MCF 10A (cell line): ENCODE measurements at regions of chr3 and their contacts with region 1.

Region 1: GRCh38 chr3:160449636-160450598 is at the start of gene TRIM59:
- DNase-seq: peak; percentile 94
- H3K4me3 Mint-ChIP-seq: peak within 1 kb of the TSS; percentile 100
- H3K27ac Mint-ChIP-seq: peak within 1 kb of the TSS; percentile 95
- H3K4me1 Mint-ChIP-seq: peaks cover 5% of the 10 kb centered on the region
- H3K27me3 Mint-ChIP-seq: no peaks in the 10 kb centered on the region
- CTCF ChIP-seq: no peak
- total RNA-seq, gene TRIM59: 12.1 and 15.1 TPM in 2 replicates

Region 2: DNA sequence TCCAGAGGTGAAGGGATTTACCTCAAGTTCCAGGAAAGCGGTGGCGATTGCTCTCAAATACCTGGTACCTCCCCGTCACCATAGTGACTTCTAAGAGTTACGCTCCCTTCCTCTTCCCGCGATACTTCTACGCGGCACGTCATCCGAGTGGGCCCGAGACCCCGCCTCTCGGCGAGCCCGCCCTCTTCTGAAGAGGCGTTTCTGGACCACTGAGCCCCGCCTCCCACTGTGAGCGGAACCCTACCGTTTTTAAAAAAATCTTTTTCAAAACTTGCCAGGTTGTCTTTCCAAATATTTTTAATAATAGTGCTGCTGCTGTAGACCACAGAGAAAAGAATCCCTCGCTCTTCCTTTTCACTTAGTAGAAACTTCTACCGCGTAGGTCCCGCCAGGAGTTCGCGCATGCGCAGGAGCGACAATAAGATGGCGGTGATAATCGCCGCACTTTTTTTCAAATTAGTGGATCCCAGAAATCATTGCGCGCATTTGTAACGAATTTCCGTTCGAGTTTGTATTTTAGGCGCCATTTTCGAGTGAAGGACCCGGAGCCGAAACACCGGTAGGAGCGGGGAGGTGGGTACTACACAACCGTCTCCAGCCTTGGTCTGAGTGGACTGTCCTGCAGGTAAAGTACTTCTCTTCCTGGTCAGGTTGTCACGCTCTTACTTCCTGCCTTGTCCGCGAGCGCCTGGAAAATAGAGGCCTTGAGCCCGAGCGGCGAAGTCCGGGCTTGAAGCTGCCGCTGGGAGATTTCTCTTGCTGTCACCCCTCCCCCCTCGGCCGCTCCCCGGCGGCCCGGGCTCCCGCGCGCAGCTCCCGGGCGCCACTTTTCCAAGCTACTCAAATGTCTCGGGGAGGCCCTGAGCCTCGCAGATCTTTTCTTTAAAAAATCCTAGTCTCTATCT is 50.5 kb before region 1 on chr3 and contains the starts of genes IFT80 and SMC4:
- CTCF ChIA-PET with region 1: no interaction called
- POLR2A ChIA-PET with region 1: interaction called, 31 read pairs
- intact Hi-C with region 1: loop called (anchors 5 kb)
- DNase-seq: peak; percentile 97
- H3K4me3 Mint-ChIP-seq: peak within 1 kb of the TSS; percentile 88
- H3K27ac Mint-ChIP-seq: peak within 1 kb of the TSS; percentile 100
- H3K4me1 Mint-ChIP-seq: peaks cover 31% of the 10 kb centered on the region
- H3K27me3 Mint-ChIP-seq: no peaks in the 10 kb centered on the region
- CTCF ChIP-seq: no peak
- total RNA-seq, gene IFT80: 22.6 and 29.0 TPM in 2 replicates
- total RNA-seq, gene SMC4: 89.3 and 116 TPM in 2 replicates

Region 3: GRCh38 chr3:160413613-160414248 is 36.2 kb before region 1 on chr3:
- CTCF ChIA-PET with region 1: interaction called, 4 read pairs
- POLR2A ChIA-PET with region 1: interaction called, 13 read pairs
- intact Hi-C with region 1: no loop called
- DNase-seq: peak; percentile 79
- H3K4me3 Mint-ChIP-seq: no peak overlapping the region
- H3K27ac Mint-ChIP-seq: no peak overlapping the region
- H3K4me1 Mint-ChIP-seq: peaks cover 18% of the 10 kb centered on the region
- H3K27me3 Mint-ChIP-seq: no peaks in the 10 kb centered on the region
- CTCF ChIP-seq: peak; percentile 78

Region 4: DNA sequence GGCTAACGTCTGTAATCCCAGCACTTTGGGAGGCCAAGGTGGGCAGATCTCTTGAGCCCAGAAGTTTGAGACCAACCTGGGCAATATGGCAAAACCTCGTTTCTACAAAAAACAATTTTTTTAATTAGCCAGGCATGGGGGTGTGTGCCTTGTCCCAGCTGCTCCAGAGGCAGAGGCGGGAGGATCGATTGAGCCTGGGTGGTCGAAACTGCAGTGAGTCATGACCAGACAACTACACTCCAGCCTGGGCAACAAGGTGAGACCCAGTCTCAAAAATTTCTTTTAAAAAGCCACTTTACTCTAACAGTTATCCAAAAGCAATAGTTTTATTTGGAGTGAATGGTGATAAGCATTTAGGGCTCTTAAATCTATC is 12.8 kb before region 1 on chr3:
- CTCF ChIA-PET with region 1: interaction called, 3 read pairs
- POLR2A ChIA-PET with region 1: interaction called, 23 read pairs
- intact Hi-C with region 1: no loop called
- DNase-seq: peak; percentile 13
- H3K4me3 Mint-ChIP-seq: no peak overlapping the region
- H3K27ac Mint-ChIP-seq: no peak overlapping the region
- H3K4me1 Mint-ChIP-seq: no peaks in the 10 kb centered on the region
- H3K27me3 Mint-ChIP-seq: no peaks in the 10 kb centered on the region
- CTCF ChIP-seq: no peak

Region 5: GRCh38 chr3:160464321-160464720 is 14.4 kb after region 1 on chr3:
- CTCF ChIA-PET with region 1: interaction called, 4 read pairs
- POLR2A ChIA-PET with region 1: interaction called, 15 read pairs
- intact Hi-C with region 1: no loop called
- DNase-seq: no peak
- H3K4me3 Mint-ChIP-seq: no peak overlapping the region
- H3K27ac Mint-ChIP-seq: no peak overlapping the region
- H3K4me1 Mint-ChIP-seq: no peaks in the 10 kb centered on the region
- H3K27me3 Mint-ChIP-seq: no peaks in the 10 kb centered on the region
- CTCF ChIP-seq: no peak

Region 6: DNA sequence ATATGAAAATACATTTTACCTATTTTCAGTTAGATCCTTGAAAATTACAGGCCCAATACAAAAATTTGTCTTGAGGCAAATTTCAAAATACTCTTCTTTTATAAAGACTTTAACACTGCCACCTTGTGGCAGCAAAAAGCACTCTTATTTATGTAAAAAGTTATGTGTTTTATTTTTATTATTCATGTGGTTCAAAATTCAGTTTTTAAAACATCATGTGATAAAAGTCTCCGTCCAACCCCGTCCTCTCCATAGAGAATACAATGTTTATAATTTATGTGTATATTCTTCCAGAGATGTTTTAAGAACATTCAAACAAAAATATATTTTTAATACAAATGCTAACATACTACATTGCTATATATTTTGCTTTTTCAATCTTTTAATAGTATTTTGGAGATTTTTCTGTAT is 36.5 kb after region 1 on chr3:
- CTCF ChIA-PET with region 1: interaction called, 10 read pairs
- POLR2A ChIA-PET with region 1: interaction called, 5 read pairs
- intact Hi-C with region 1: loop called (anchors 5 kb)
- DNase-seq: peak; percentile 53
- H3K4me3 Mint-ChIP-seq: no peak overlapping the region
- H3K27ac Mint-ChIP-seq: no peak overlapping the region
- H3K4me1 Mint-ChIP-seq: no peaks in the 10 kb centered on the region
- H3K27me3 Mint-ChIP-seq: no peaks in the 10 kb centered on the region
- CTCF ChIP-seq: peak; percentile 61

Region 7: GRCh38 chr3:160565442-160566403 is 115.8 kb after region 1 on chr3 and contains the start of gene KPNA4:
- CTCF ChIA-PET with region 1: no interaction called
- POLR2A ChIA-PET with region 1: interaction called, 7 read pairs
- intact Hi-C with region 1: loop called (anchors 5 kb)
- DNase-seq: peak; percentile 98
- H3K4me3 Mint-ChIP-seq: peak within 1 kb of the TSS; percentile 96
- H3K27ac Mint-ChIP-seq: peak within 1 kb of the TSS; percentile 99
- H3K4me1 Mint-ChIP-seq: peaks cover 30% of the 10 kb centered on the region
- H3K27me3 Mint-ChIP-seq: no peaks in the 10 kb centered on the region
- CTCF ChIP-seq: no peak
- total RNA-seq, gene KPNA4: 85.9 and 127 TPM in 2 replicates